Left lung (tissue), 14 donors: ENCODE measurements at regions of chr11 and their contacts with region 1.

Region 1: GRCh38 chr11:120172054-120172911 is 34.4 kb upstream of the TRIM29 start:
- DNase-seq: peak in 3 of 4 donors; percentile 29 to 69 (median 57)
- ATAC-seq: peak; percentile 68
- H3K4me3 ChIP-seq: no peak overlapping the region
- H3K27ac ChIP-seq: no peak overlapping the region
- H3K4me1 ChIP-seq: peaks cover 10 to 16% of the 10 kb centered on the region in 2 donors
- H3K27me3 ChIP-seq: peaks cover 13 to 73% of the 10 kb centered on the region in 2 donors
- CTCF ChIP-seq: peak; percentile 55 to 82

Region 2: GRCh38 chr11:120229451-120230424 is 57.5 kb after region 1 on chr11:
- intact Hi-C with region 1: loop called in 1 of 2 experiments (anchors 5 kb)
- DNase-seq: no peak
- ATAC-seq: peak; percentile 26
- H3K4me3 ChIP-seq: no peak overlapping the region
- H3K27ac ChIP-seq: no peak overlapping the region
- H3K4me1 ChIP-seq: peaks cover 0 to 9% of the 10 kb centered on the region in 2 donors
- H3K27me3 ChIP-seq: peaks cover 0 to 32% of the 10 kb centered on the region in 2 donors
- CTCF ChIP-seq: peak; percentile 41 to 61

Region 3: DNA sequence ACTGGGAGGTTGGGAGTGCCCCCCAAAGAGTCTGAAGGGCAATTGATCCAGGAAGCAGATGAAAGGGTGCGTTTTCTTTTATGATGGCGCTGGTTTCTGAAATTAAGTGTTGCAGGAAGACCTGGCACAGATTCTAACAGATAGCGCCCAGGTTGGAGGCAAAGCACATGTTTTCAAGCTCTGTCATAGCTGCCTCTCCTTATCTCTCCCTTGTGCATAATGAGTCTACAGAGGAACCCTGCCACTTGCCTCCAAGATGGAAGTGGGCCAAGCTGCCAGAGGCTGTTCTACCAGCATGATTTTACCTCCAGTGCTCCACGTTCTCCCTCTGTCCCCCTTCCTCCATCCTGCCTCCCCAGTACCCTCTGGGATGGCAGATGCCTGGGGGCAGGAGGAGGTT is 122.8 kb after region 1 on chr11:
- intact Hi-C with region 1: loop called in 1 of 2 experiments (anchors 5 kb)
- DNase-seq: no peak
- ATAC-seq: no peak
- H3K4me3 ChIP-seq: no peak overlapping the region
- H3K27ac ChIP-seq: no peak overlapping the region
- H3K4me1 ChIP-seq: peaks cover 0 to 2% of the 10 kb centered on the region in 2 donors
- H3K27me3 ChIP-seq: peaks cover 0 to 62% of the 10 kb centered on the region in 2 donors
- CTCF ChIP-seq: no peak